Activated B cell treated with CpG ODN at 0.5 μM for 24 hours (primary cell): ENCODE measurements at regions of chr20 and their contacts with region 1.

Region 1: GRCh38 chr20:19706463-19706862 is 51.6 kb upstream of the RIN2 start:
- DNase-seq: peak; percentile 34
- ATAC-seq: peak; percentile 96
- H3K4me3 Mint-ChIP-seq: no peak overlapping the region
- H3K27ac Mint-ChIP-seq: no peak overlapping the region
- H3K4me1 Mint-ChIP-seq: peaks cover 25% of the 10 kb centered on the region
- H3K27me3 Mint-ChIP-seq: no peaks in the 10 kb centered on the region
- CTCF ChIP-seq: no peak

Region 2: DNA sequence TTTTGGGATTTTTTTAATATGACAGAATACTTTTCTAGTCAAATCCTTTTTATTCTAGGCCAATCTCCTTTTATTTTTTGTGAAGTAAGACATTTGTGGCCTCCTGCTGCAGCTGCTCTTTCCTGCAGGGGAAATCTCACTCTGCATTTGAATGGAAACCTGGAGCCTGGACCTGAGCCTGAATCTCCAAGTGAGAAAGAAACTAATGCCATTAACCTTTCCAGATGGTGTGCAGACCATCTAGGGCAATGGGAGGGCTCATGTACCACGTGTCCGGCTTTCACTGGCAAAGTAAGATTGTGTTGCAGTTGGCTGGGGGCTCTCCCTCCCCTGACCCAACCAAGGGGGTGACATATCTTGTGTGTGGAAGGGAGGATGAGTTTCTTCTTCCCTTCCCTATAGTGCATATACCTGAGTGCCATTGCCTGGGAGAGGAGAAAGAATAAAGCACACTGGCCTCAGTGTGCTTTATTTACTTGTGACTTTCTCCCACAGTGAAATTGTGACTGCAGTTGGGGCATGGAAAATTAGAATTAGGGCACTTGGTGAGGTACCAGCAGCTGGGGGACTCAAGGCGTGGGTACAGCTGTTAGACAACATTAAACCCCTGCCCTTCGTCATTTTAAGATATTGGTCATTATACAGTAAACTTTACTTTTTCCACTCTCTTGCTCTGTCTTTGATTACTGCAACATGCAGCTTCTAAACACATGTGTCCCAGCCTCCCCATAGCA is 108.2 kb before region 1 on chr20:
- CTCF ChIA-PET with region 1: no interaction called
- POLR2A ChIA-PET with region 1: no interaction called
- intact Hi-C with region 1: no loop called
- DNase-seq: no peak
- ATAC-seq: no peak
- H3K4me3 Mint-ChIP-seq: no peak overlapping the region
- H3K27ac Mint-ChIP-seq: no peak overlapping the region
- H3K4me1 Mint-ChIP-seq: no peaks in the 10 kb centered on the region
- H3K27me3 Mint-ChIP-seq: peaks cover 4% of the 10 kb centered on the region
- CTCF ChIP-seq: no peak

Region 3: GRCh38 chr20:19692685-19693119 is 13.8 kb before region 1 on chr20:
- CTCF ChIA-PET with region 1: interaction called, 16 read pairs
- POLR2A ChIA-PET with region 1: no interaction called
- intact Hi-C with region 1: loop called (anchors 1 kb)
- DNase-seq: peak; percentile 64
- ATAC-seq: peak; percentile 71
- H3K4me3 Mint-ChIP-seq: peak overlapping the region; percentile 49
- H3K27ac Mint-ChIP-seq: peak overlapping the region; percentile 76
- H3K4me1 Mint-ChIP-seq: peaks cover 11% of the 10 kb centered on the region
- H3K27me3 Mint-ChIP-seq: peaks cover 7% of the 10 kb centered on the region
- CTCF ChIP-seq: peak; percentile 76

Region 4: DNA sequence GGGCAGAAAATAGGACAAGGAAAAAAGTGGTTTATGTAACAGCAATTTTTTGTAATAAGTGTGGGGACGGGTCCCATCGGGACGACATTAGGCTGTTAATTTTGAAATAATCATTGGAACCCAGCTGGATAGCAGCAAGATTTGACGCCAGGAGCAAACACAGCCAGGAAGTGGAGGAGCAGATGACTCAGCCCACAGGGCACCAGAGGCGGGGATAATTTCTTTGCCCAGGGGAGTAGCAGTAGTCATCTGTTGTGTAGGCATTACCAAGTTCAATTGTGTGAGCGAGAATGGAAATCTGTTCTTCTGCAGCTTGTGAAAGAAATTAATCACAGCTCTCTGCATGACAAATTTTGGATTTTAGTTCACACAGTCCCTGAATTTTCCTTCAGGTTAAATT is 29.0 kb after region 1 on chr20:
- CTCF ChIA-PET with region 1: interaction called, 5 read pairs
- POLR2A ChIA-PET with region 1: no interaction called
- intact Hi-C with region 1: loop called (anchors 2 kb)
- DNase-seq: no peak
- ATAC-seq: peak; percentile 95
- H3K4me3 Mint-ChIP-seq: no peak overlapping the region
- H3K27ac Mint-ChIP-seq: no peak overlapping the region
- H3K4me1 Mint-ChIP-seq: peaks cover 12% of the 10 kb centered on the region
- H3K27me3 Mint-ChIP-seq: peaks cover 6% of the 10 kb centered on the region
- CTCF ChIP-seq: no peak

Region 5: GRCh38 chr20:19815553-19815991 is 109.1 kb after region 1 on chr20:
- CTCF ChIA-PET with region 1: no interaction called
- POLR2A ChIA-PET with region 1: interaction called, 6 read pairs
- intact Hi-C with region 1: loop called (anchors 1 kb)
- DNase-seq: peak; percentile 31
- ATAC-seq: peak; percentile 91
- H3K4me3 Mint-ChIP-seq: peak overlapping the region; percentile 72
- H3K27ac Mint-ChIP-seq: peak overlapping the region; percentile 78
- H3K4me1 Mint-ChIP-seq: peaks cover 70% of the 10 kb centered on the region
- H3K27me3 Mint-ChIP-seq: no peaks in the 10 kb centered on the region
- CTCF ChIP-seq: no peak

Region 6: GRCh38 chr20:19915111-19915798 is 208.8 kb after region 1 on chr20:
- CTCF ChIA-PET with region 1: no interaction called
- POLR2A ChIA-PET with region 1: no interaction called
- intact Hi-C with region 1: loop called (anchors 5 kb)
- DNase-seq: peak; percentile 28
- ATAC-seq: peak; percentile 78
- H3K4me3 Mint-ChIP-seq: peak overlapping the region; percentile 29
- H3K27ac Mint-ChIP-seq: peak overlapping the region; percentile 87
- H3K4me1 Mint-ChIP-seq: peaks cover 65% of the 10 kb centered on the region
- H3K27me3 Mint-ChIP-seq: no peaks in the 10 kb centered on the region
- CTCF ChIP-seq: no peak

Region 7: GRCh38 chr20:20017001-20017843 is 310.8 kb after region 1 on chr20 and contains the start of gene NAA20:
- CTCF ChIA-PET with region 1: no interaction called
- POLR2A ChIA-PET with region 1: interaction called, 3 read pairs
- intact Hi-C with region 1: loop called (anchors 5 kb)
- DNase-seq: peak; percentile 83
- ATAC-seq: peak; percentile 99
- H3K4me3 Mint-ChIP-seq: peak within 1 kb of the TSS; percentile 91
- H3K27ac Mint-ChIP-seq: peak within 1 kb of the TSS; percentile 90
- H3K4me1 Mint-ChIP-seq: peaks cover 41% of the 10 kb centered on the region
- H3K27me3 Mint-ChIP-seq: no peaks in the 10 kb centered on the region
- CTCF ChIP-seq: no peak
- total RNA-seq, gene NAA20: 44.8 and 47.6 TPM in 2 replicates

Region 8: DNA sequence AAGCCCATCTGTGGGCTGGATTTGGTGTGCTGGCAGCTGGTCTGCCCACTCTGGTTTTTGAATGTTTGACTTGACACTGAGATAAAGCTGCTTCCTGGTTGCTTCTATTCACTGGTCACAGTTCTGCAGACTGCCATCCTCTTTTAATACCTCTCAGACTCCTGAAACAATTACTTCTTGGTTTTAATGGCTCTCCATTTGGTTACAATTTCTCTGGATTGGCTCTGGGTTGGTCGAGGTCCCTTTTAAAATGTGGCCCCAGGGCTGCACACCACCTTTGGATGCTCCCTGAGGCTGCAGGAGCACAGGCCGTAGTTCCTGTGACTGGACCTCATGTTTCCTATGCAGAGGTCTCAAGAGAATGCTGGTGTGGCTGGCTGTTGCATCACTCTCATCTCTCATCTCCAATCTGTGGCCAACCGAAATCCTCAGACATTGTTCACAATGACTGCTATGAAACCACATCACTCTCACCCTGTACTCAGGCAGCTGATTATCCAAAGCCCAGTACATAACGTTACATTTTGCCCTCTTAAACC is 759.9 kb after region 1 on chr20:
- CTCF ChIA-PET with region 1: no interaction called
- POLR2A ChIA-PET with region 1: no interaction called
- intact Hi-C with region 1: loop called (anchors 10 kb)
- DNase-seq: peak; percentile 30
- ATAC-seq: peak; percentile 76
- H3K4me3 Mint-ChIP-seq: peak overlapping the region; percentile 50
- H3K27ac Mint-ChIP-seq: peak overlapping the region; percentile 93
- H3K4me1 Mint-ChIP-seq: peaks cover 57% of the 10 kb centered on the region
- H3K27me3 Mint-ChIP-seq: no peaks in the 10 kb centered on the region
- CTCF ChIP-seq: no peak